Prostate gland (tissue), 2 donors: ENCODE measurements at regions of chr1 and their contacts with region 1.

Region 1: DNA sequence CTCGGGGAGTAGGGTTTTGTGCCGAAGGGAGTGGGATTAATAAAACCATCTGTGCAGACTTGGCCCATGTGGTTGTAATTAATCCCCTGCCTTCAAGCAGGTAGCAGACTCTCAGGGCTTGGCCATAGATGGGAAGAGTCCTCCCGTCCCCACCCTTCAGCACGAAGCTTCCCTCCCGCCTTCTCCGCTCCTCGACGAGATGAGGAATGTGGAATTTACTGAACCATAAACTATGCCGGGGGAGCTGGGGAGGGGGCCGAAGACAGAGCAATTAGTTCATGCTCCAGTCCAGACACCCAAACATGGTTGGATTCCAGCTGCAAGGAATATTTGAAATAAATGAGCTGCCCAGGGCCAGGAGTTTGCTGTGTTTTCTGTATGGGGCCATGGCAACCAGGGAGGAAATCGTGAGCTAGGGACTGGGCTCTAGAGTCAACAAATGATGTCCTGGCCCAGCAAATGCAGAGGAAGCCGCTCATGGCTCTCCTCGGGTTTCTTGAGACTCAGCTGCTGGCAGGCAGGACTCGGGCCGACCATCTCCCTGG is 78.8 kb downstream of the SPSB1 start:
- DNase-seq: peak; percentile 16
- H3K4me3 ChIP-seq: no peak overlapping the region
- H3K27ac ChIP-seq: peak overlapping the region; percentile 56 to 57
- H3K4me1 ChIP-seq: no peaks in the 10 kb centered on the region
- H3K27me3 ChIP-seq: no peaks in the 10 kb centered on the region
- CTCF ChIP-seq: no peak
- POLR2A ChIP-seq: no peak

Region 2: GRCh38 chr1:9302745-9303524 is 68.5 kb before region 1 on chr1:
- intact Hi-C with region 1: no loop called
- DNase-seq: peak; percentile 61
- H3K4me3 ChIP-seq: no peak overlapping the region
- H3K27ac ChIP-seq: peak overlapping the region in 1 of 2 donors; percentile 41
- H3K4me1 ChIP-seq: peaks cover 9% of the 10 kb centered on the region
- H3K27me3 ChIP-seq: no peaks in the 10 kb centered on the region
- CTCF ChIP-seq: no peak
- POLR2A ChIP-seq: peak; percentile 13

Region 3: DNA sequence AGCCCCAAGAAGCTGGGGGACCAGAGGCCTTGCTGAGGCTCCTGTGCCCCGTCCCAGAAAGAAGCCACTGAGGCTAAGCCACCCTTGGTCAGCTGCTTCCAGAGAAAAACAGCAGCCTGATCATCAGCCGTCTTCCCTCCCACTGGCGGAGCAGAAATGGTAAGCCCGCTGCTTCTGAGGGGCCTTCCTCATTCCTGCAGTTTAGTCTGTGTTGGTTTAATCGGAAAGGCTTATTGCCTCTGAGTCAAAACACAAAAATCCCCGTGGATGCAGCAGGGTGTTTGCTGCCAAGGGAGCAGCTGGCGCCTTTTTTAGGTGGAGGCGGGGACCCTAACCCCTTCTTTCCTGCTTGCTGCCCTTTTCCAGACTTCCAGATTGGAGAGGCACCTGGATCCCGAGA is 44.9 kb before region 1 on chr1:
- intact Hi-C with region 1: loop called (anchors 5 kb)
- DNase-seq: no peak
- H3K4me3 ChIP-seq: no peak overlapping the region
- H3K27ac ChIP-seq: peak overlapping the region; percentile 35 to 38
- H3K4me1 ChIP-seq: no peaks in the 10 kb centered on the region
- H3K27me3 ChIP-seq: no peaks in the 10 kb centered on the region
- CTCF ChIP-seq: no peak
- POLR2A ChIP-seq: no peak